T-cell (primary cell): ENCODE measurements at regions of chr18 and their contacts with region 1.

Region 1: GRCh38 chr18:22667616-22668422 is 250.1 kb upstream of the CTAGE1 start:
- DNase-seq: no peak
- ATAC-seq: no peak
- H3K4me3 ChIP-seq: no peak overlapping the region
- H3K4me3 Mint-ChIP-seq: no peak overlapping the region
- H3K27ac ChIP-seq: no peak overlapping the region
- H3K27ac Mint-ChIP-seq: no peak overlapping the region
- H3K4me1 ChIP-seq: no peaks in the 10 kb centered on the region
- H3K4me1 Mint-ChIP-seq: no peaks in the 10 kb centered on the region
- H3K27me3 ChIP-seq: peaks cover 0 to 2% of the 10 kb centered on the region in 2 experiments
- H3K27me3 Mint-ChIP-seq: peaks cover 9 to 11% of the 10 kb centered on the region in 2 donors

Region 2: DNA sequence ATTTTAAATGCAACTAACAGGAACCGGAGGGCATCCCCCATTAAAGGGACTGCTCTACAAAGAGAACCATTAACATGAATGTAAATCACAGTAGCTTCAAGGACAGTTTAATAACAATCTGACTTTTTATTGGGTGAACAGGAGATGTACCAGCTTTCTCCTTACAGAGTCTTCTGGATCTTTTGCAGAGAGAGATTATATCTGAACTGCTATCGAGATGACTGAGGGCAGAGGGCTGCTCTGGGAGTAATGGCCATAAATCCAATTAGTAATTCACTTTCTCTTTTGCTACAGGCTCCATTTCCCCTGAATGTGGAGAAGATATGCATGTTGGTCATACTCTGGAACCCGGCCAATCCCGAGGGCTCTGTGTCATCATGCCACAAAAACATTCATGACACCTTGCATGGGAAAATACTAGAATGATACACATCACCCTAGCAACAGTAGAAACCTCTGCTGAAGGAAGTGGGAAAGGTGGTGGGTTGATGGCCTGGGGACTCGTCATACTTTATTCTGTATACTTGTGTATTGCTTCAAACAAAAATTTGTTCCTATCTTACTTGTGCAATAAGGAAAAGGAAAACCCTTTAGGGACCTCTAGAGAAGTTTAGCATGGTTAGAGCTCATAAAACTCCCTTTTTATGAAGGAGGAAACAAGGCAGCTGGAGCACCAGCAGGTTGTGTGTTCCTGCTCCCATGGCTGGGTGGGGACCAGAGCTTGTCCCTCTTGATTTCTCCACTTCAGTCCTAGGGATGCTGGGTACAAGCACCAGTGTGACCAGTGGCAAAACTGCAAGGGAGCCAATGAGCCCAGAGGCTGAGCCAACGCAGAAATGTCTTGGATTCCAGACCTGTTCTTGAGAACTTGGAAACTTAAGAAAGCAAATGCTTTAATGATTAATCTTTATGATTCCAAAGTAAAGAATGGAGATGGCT is 276.1 kb before region 1 on chr18:
- CTCF ChIA-PET with region 1: no interaction called
- POLR2A ChIA-PET with region 1: no interaction called
- DNase-seq: peak in 33 of 35 experiments; percentile 18 to 79 (median 47)
- ATAC-seq: peak; percentile 27 to 73 (median 56)
- H3K4me3 ChIP-seq: no peak overlapping the region
- H3K4me3 Mint-ChIP-seq: no peak overlapping the region
- H3K27ac ChIP-seq: peak overlapping the region; percentile 54
- H3K27ac Mint-ChIP-seq: no peak overlapping the region
- H3K4me1 ChIP-seq: peaks cover 0 to 6% of the 10 kb centered on the region in 2 experiments
- H3K4me1 Mint-ChIP-seq: peaks cover 0 to 11% (median 7%) of the 10 kb centered on the region in 3 donors
- H3K27me3 ChIP-seq: no peaks in the 10 kb centered on the region
- H3K27me3 Mint-ChIP-seq: no peaks in the 10 kb centered on the region

Region 3: DNA sequence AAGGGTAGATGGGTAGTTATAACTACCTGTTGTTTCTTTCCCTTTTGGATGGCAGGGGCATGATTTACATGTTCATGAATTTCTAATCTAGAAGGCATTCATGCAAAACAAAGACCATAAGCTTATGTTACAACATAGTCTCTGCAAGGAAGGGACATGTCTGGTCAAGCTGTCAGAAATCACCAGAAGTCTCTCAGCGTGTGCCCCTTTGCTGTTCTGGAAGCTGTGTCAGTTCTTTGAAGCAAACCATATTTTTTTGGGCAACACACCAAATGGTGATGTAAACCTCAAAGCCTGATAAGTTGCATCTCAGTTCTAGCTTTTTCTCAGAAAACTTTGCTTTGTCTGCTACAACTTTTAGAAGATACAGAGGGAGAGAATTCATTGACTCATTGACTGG is 76.6 kb before region 1 on chr18:
- CTCF ChIA-PET with region 1: no interaction called
- POLR2A ChIA-PET with region 1: no interaction called
- DNase-seq: no peak
- ATAC-seq: no peak
- H3K4me3 ChIP-seq: no peak overlapping the region
- H3K4me3 Mint-ChIP-seq: no peak overlapping the region
- H3K27ac ChIP-seq: no peak overlapping the region
- H3K27ac Mint-ChIP-seq: no peak overlapping the region
- H3K4me1 ChIP-seq: no peaks in the 10 kb centered on the region
- H3K4me1 Mint-ChIP-seq: no peaks in the 10 kb centered on the region
- H3K27me3 ChIP-seq: no peaks in the 10 kb centered on the region
- H3K27me3 Mint-ChIP-seq: peaks cover 0 to 4% of the 10 kb centered on the region in 2 donors

Region 4: DNA sequence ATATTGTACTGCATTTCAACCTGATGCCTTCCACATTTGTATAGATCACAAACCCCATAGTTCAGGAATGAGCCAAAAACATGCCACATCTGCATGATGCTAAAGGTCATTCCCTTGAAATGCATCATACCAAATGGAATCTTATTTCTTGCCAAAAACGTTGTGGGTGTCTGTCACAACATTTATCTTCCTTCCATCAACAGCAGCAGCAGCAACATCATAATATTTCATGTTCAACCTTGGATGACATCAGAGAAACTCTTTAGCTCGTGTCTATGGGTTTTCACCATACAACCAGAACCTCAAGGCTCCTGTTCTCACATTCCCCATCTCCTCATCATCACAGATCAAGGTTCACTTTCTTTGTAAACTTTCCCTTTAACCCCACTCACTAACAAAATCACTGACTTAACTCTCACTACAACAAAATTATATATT is 28.8 kb before region 1 on chr18:
- CTCF ChIA-PET with region 1: no interaction called
- POLR2A ChIA-PET with region 1: interaction called in 1 of 2 experiments, 10 read pairs
- DNase-seq: no peak
- ATAC-seq: no peak
- H3K4me3 ChIP-seq: no peak overlapping the region
- H3K4me3 Mint-ChIP-seq: no peak overlapping the region
- H3K27ac ChIP-seq: no peak overlapping the region
- H3K27ac Mint-ChIP-seq: no peak overlapping the region
- H3K4me1 ChIP-seq: no peaks in the 10 kb centered on the region
- H3K4me1 Mint-ChIP-seq: no peaks in the 10 kb centered on the region
- H3K27me3 ChIP-seq: peaks cover 0 to 3% of the 10 kb centered on the region in 2 experiments
- H3K27me3 Mint-ChIP-seq: peaks cover 1 to 10% of the 10 kb centered on the region in 2 donors